Activated CD4-positive, alpha-beta memory T cell treated with anti-CD3 and anti-CD28 coated beads, Interleukin-2, amount 10 ng/mL, durations not matched to agents 7 days and 5 days (primary cell): ENCODE measurements at regions of chr12 and their contacts with region 1.

Region 1: GRCh38 chr12:92145731-92146496 is at the start of gene BTG1:
- DNase-seq: peak; percentile 100
- H3K4me3 Mint-ChIP-seq: peak within 1 kb of the TSS; percentile 99
- H3K27ac Mint-ChIP-seq: peak within 1 kb of the TSS; percentile 98
- H3K4me1 Mint-ChIP-seq: peaks cover 27% of the 10 kb centered on the region
- H3K27me3 Mint-ChIP-seq: no peaks in the 10 kb centered on the region
- total RNA-seq, gene BTG1: 217 to 227 TPM

Region 2: DNA sequence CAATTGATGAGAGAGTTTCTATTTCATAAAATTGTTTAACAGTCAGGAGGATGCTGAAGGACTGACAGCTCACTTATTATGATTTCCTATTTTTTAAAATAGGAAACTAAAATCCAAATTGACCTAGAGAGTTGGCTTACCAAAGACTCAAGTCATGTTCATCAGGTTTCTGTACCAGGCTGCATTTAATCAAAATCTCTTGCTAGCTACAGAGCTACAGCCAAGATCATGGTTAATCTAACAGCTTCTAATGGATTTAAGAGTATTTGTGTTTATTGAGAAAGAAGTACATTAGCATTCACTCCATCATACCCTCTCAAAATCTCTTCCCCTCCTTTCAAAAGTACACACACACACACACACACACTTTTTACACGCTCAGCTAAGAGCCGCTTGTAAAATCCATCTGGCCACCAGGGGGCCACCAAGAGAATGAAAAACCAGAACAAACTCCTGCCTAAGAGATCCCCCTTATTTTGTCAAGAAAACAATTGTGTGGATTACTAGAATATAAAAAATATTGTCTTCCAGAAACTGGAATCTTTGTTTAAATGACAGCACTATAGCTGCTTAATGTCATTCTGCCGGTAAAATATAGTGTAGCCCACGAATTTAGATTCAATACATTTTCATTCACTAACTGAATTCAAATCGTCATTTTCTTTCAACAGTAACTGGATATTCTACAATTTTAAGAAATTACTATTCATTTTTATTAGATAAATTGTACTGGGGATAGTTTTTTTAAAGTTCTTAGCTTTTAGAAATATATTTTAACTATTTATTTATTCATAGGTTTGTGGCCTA is 334.2 kb before region 1 on chr12:
- CTCF ChIA-PET with region 1: interaction called, 41 read pairs
- POLR2A ChIA-PET with region 1: interaction called, 58 read pairs
- DNase-seq: peak; percentile 69
- H3K4me3 Mint-ChIP-seq: no peak overlapping the region
- H3K27ac Mint-ChIP-seq: peak overlapping the region; percentile 13
- H3K4me1 Mint-ChIP-seq: peaks cover 5% of the 10 kb centered on the region
- H3K27me3 Mint-ChIP-seq: no peaks in the 10 kb centered on the region

Region 3: GRCh38 chr12:92007787-92008186 is 138.1 kb before region 1 on chr12:
- CTCF ChIA-PET with region 1: interaction called, 3 read pairs
- POLR2A ChIA-PET with region 1: interaction called, 16 read pairs
- DNase-seq: no peak
- H3K4me3 Mint-ChIP-seq: no peak overlapping the region
- H3K27ac Mint-ChIP-seq: no peak overlapping the region
- H3K4me1 Mint-ChIP-seq: peaks cover 7% of the 10 kb centered on the region
- H3K27me3 Mint-ChIP-seq: no peaks in the 10 kb centered on the region

Region 4: DNA sequence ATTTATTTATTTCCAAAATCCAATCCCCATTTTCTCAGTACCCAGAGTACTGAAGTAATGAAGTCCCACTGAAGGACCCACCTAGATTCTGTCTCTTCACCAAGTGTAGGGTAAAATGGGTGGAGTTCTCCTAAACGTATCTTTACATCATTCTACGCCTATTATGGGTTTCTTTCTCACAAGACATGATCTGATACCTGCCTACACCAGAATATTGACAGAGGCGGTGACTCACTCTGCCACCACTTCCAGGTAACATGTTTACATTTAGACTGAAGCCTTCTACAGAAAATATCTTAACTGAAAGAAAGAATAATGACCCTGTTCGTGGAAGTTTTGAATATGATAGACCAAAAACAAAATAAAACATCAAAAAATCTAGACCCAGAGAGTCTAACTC is 90.0 kb before region 1 on chr12:
- CTCF ChIA-PET with region 1: interaction called, 4 read pairs
- POLR2A ChIA-PET with region 1: interaction called, 44 read pairs
- DNase-seq: peak; percentile 74
- H3K4me3 Mint-ChIP-seq: peak overlapping the region; percentile 45
- H3K27ac Mint-ChIP-seq: peak overlapping the region; percentile 89
- H3K4me1 Mint-ChIP-seq: peaks cover 64% of the 10 kb centered on the region
- H3K27me3 Mint-ChIP-seq: no peaks in the 10 kb centered on the region

Region 5: DNA sequence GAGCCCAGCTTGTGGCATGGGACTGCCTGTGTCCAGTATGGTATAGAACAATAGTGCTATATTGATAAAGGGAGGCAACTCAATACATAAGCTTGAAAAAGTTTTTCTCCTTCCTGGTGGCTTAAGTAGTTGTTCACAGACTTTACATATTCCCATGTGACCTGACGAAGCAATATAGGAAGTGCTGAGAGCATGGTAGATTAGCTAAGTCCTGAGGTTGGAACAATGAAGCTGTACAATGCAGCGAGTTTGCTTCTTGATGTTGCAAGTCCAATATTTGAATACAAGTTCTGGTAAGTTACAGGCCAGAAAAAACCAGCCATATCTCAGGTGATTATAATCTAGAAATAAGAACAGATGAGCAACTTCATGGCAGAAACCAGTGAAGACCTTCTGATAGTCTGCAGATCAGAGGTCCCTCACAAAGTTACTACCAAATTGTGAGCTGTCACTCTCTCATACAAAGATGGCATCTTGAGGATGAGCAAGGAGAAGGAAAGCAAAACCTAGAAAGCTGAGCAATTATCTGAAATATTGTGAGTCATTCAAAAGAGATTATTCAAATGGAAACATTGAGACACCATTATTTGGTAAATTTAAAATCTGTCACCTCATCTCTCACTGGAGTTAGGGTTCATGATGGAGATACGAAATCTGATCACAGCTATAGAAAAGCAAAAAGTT is 72.6 kb after region 1 on chr12:
- CTCF ChIA-PET with region 1: interaction called, 3 read pairs
- POLR2A ChIA-PET with region 1: interaction called, 218 read pairs
- DNase-seq: no peak
- H3K4me3 Mint-ChIP-seq: no peak overlapping the region
- H3K27ac Mint-ChIP-seq: no peak overlapping the region
- H3K4me1 Mint-ChIP-seq: peaks cover 20% of the 10 kb centered on the region
- H3K27me3 Mint-ChIP-seq: no peaks in the 10 kb centered on the region

Region 6: GRCh38 chr12:92505254-92506231 is 359.6 kb after region 1 on chr12:
- CTCF ChIA-PET with region 1: interaction called, 11 read pairs
- POLR2A ChIA-PET with region 1: interaction called, 90 read pairs
- DNase-seq: peak; percentile 59
- H3K4me3 Mint-ChIP-seq: peak overlapping the region; percentile 74
- H3K27ac Mint-ChIP-seq: peak overlapping the region; percentile 91
- H3K4me1 Mint-ChIP-seq: peaks cover 46% of the 10 kb centered on the region
- H3K27me3 Mint-ChIP-seq: no peaks in the 10 kb centered on the region

Region 7: GRCh38 chr12:92593734-92594402 is 448.0 kb after region 1 on chr12:
- CTCF ChIA-PET with region 1: interaction called, 3 read pairs
- POLR2A ChIA-PET with region 1: interaction called, 47 read pairs
- DNase-seq: peak; percentile 82
- H3K4me3 Mint-ChIP-seq: peak overlapping the region; percentile 28
- H3K27ac Mint-ChIP-seq: peak overlapping the region; percentile 95
- H3K4me1 Mint-ChIP-seq: peaks cover 39% of the 10 kb centered on the region
- H3K27me3 Mint-ChIP-seq: no peaks in the 10 kb centered on the region